WTC11 (cell line): ENCODE measurements at regions of chr6 and their contacts with region 1.

Region 1: GRCh38 chr6:35139908-35140655 is 1.1 kb downstream of the TCP11 start:
- DNase-seq: peak; percentile 39
- ATAC-seq: peak; percentile 25
- H3K4me3 Mint-ChIP-seq: no peak overlapping the region
- H3K27ac Mint-ChIP-seq: no peak overlapping the region
- H3K4me1 Mint-ChIP-seq: peaks cover 9% of the 10 kb centered on the region
- H3K27me3 Mint-ChIP-seq: peaks cover 24% of the 10 kb centered on the region
- CTCF ChIP-seq: peak; percentile 76

Region 2: DNA sequence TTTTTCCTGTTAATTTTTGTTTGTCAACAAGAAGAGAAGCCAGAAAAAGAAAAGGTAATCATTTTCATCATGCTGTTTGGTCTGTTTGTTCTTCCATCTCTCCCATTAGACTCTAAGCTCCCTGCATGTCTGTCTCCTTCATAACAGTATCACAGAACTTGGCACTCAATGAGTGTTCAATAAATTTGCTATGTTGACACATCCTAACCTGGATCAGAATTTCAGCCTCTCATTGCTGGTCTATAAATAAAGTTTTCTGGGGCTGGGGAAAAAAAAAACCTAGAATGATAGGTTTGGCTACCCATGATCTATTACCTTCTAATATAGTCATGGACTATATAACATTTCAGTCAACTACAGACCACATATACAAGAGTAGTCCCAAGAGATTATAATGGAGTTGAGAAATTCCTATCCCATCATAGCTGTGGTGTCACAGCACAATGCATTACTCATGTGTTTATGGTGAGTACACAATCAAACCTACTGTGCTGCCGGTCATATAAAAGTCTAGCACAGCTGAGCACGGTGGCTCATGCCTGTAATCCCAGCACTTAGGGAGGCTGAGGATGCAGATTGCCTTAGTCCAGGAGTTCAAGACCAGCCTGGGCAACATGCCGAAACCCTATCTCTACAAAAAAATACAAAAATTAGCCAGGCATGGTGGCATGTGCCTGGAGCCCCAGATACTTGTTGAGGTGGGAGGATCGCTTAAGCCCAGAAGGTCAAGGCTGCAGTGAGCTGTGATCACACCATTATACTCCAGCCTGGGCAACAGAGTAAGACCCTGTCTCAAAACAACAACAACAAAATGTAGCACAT is 753.6 kb before region 1 on chr6:
- CTCF ChIA-PET with region 1: no interaction called
- POLR2A ChIA-PET with region 1: no interaction called
- DNase-seq: no peak
- ATAC-seq: no peak
- H3K4me3 Mint-ChIP-seq: no peak overlapping the region
- H3K27ac Mint-ChIP-seq: peak overlapping the region; percentile 77; the same call in 1 of the 2 replicates
- H3K4me1 Mint-ChIP-seq: peaks cover 35% of the 10 kb centered on the region
- H3K27me3 Mint-ChIP-seq: no peaks in the 10 kb centered on the region
- CTCF ChIP-seq: no peak

Region 3: GRCh38 chr6:34887753-34888513 is 252.1 kb before region 1 on chr6 and contains the start of gene TAF11:
- CTCF ChIA-PET with region 1: interaction called, 11 read pairs
- POLR2A ChIA-PET with region 1: interaction called, 4 read pairs
- DNase-seq: peak; percentile 92
- ATAC-seq: peak; percentile 75
- H3K4me3 Mint-ChIP-seq: peak within 1 kb of the TSS; percentile 100
- H3K27ac Mint-ChIP-seq: peak within 1 kb of the TSS; percentile 100
- H3K4me1 Mint-ChIP-seq: peaks cover 14% of the 10 kb centered on the region
- H3K27me3 Mint-ChIP-seq: no peaks in the 10 kb centered on the region
- CTCF ChIP-seq: no peak
- total RNA-seq, gene TAF11: 40.8 to 44.1 TPM (median 42.2 TPM) in 3 replicates

Region 4: DNA sequence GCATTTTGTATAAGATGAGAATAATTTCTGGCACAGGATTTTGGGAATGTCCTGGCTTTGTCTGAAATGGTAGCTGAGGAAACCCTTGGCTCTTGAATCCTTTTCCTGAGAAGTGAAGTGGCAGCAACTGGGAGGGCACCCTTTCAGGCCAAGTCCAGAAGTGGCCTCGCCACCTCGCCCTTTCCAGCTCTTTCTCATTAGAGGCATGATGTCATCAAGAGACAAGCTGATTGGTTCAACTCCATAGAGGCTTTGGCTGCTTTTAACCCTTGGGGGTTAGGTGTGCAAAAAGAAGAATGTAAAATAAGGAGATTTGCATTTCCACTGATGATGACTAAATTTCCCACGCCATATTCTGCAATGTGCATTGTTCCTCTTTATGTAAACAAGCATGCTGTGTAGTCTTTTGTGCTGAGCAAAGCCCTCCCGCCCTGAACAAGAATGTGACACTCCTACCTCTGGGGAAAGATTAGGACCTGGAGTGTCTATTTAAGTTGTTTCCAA is 115.5 kb before region 1 on chr6:
- CTCF ChIA-PET with region 1: interaction called, 10 read pairs
- POLR2A ChIA-PET with region 1: no interaction called
- DNase-seq: no peak
- ATAC-seq: peak; percentile 59
- H3K4me3 Mint-ChIP-seq: peak overlapping the region; percentile 35
- H3K27ac Mint-ChIP-seq: peak overlapping the region; percentile 29
- H3K4me1 Mint-ChIP-seq: peaks cover 78% of the 10 kb centered on the region
- H3K27me3 Mint-ChIP-seq: no peaks in the 10 kb centered on the region
- CTCF ChIP-seq: no peak

Region 5: GRCh38 chr6:35048631-35049083 is 91.4 kb before region 1 on chr6:
- CTCF ChIA-PET with region 1: interaction called, 13 read pairs
- POLR2A ChIA-PET with region 1: no interaction called
- DNase-seq: peak; percentile 42
- ATAC-seq: peak; percentile 43
- H3K4me3 Mint-ChIP-seq: no peak overlapping the region
- H3K27ac Mint-ChIP-seq: no peak overlapping the region
- H3K4me1 Mint-ChIP-seq: no peaks in the 10 kb centered on the region
- H3K27me3 Mint-ChIP-seq: no peaks in the 10 kb centered on the region
- CTCF ChIP-seq: no peak

Region 6: DNA sequence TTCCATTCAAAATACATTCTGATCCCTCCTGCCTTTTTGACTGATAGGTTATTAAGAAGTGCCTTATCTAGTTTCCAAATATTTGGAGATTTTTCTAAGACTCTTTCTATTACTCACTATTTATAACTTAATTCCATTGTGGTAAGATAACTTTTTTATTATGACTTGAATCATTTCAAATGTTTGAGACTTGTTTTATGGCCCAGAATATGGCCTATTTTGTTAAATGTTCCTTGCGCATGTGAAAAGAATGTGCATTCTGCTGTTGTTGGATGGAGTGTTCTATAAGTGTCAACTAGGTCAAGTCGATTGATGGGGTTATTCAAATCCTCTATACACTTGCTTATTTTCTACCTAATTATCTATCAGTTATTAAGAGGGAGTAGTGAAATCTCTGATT is 14.2 kb after region 1 on chr6:
- CTCF ChIA-PET with region 1: no interaction called
- POLR2A ChIA-PET with region 1: no interaction called
- DNase-seq: no peak
- ATAC-seq: no peak
- H3K4me3 Mint-ChIP-seq: no peak overlapping the region
- H3K27ac Mint-ChIP-seq: no peak overlapping the region
- H3K4me1 Mint-ChIP-seq: no peaks in the 10 kb centered on the region; the same call in 1 of the 2 replicates
- H3K27me3 Mint-ChIP-seq: peaks cover 27% of the 10 kb centered on the region
- CTCF ChIP-seq: no peak

Region 7: GRCh38 chr6:35202066-35202546 is 62.0 kb after region 1 on chr6:
- CTCF ChIA-PET with region 1: interaction called, 21 read pairs
- POLR2A ChIA-PET with region 1: interaction called, 4 read pairs
- DNase-seq: no peak
- ATAC-seq: peak; percentile 65
- H3K4me3 Mint-ChIP-seq: no peak overlapping the region
- H3K27ac Mint-ChIP-seq: no peak overlapping the region
- H3K4me1 Mint-ChIP-seq: peaks cover 4% of the 10 kb centered on the region
- H3K27me3 Mint-ChIP-seq: peaks cover 39% of the 10 kb centered on the region
- CTCF ChIP-seq: no peak

Region 8: DNA sequence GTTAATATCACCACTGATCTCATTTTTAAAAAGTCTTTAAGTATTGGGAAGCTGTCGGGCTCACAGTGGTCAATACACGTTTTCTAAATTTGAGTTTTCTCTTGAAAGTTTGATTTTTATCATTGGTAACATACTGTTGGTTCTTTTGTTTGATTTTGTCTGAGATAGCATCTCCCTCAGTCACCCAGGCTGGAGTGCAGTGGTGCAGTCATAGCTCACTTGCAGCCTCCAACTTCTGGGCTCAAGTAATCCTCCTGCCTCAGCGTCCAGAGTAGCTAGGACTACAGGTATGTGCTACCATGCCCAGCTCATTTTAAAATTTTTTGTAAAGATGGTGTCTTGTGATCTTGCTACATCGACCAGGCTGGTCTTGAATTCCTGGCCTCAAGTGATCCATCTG is 211.3 kb after region 1 on chr6:
- CTCF ChIA-PET with region 1: no interaction called
- POLR2A ChIA-PET with region 1: no interaction called
- DNase-seq: no peak
- ATAC-seq: no peak
- H3K4me3 Mint-ChIP-seq: no peak overlapping the region
- H3K27ac Mint-ChIP-seq: no peak overlapping the region
- H3K4me1 Mint-ChIP-seq: no peaks in the 10 kb centered on the region; the same call in 1 of the 2 replicates
- H3K27me3 Mint-ChIP-seq: no peaks in the 10 kb centered on the region
- CTCF ChIP-seq: no peak